ENCODE measurements at regions of chr11 and their contacts with region 1.

Region 1: DNA sequence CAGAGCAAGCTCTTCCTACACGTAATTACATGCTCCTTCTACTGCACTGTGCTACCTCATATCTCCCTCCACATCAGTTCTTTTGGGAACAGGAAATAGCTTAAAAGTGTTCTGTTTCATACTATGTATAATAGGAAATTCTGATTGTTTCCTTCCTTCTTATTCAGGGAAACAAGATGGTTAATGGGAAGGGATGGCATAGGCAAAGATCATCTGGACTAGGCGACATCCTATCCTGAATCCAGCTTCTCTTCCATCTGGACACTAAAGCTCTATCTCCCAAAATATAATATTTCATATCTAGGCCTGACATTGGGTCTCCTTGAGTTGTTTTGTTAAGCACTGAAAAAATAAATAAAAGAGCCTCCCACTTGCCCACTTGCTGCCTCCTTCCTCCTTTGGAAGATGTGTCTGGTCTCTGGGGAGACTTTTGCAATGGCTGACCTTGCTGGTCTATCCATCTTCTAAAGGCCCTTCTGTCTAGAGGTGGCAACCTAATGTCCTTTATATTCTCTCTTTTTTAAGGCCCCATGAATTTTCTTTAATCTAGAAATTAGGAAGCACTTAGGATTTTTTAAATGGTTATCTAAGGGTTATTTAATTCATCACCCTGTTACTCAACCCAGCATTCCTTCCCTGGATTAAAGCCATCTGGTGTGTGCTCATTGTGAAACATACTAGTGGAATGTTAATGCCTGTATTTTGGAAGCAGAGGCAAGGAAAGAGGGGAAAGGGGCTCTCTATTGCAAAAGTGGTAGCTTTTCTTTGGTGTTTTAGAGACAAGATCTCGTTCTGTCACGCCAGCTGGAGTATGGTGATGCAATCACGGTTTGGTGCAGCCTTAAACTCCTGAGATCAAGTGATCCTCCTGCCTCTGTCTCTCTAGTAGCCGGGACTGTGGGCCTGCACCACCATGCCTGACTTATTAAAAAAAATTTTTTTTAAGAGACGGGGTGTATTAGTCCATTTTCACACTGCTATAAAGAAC is 20.6 kb downstream of the CLMP start:
- DNase-seq: peak; percentile 97
- H3K4me3 Mint-ChIP-seq: peak overlapping the region; percentile 11
- H3K27ac Mint-ChIP-seq: peak overlapping the region; percentile 90
- H3K4me1 Mint-ChIP-seq: peaks cover 48% of the 10 kb centered on the region
- H3K27me3 Mint-ChIP-seq: no peaks in the 10 kb centered on the region
- CTCF ChIP-seq: no peak

Region 2: GRCh38 chr11:123062158-123062891 is 112.2 kb before region 1 on chr11:
- CTCF ChIA-PET with region 1: no interaction called
- POLR2A ChIA-PET with region 1: interaction called, 12 read pairs
- intact Hi-C with region 1: loop called (anchors 5 kb)
- DNase-seq: peak; percentile 99
- H3K4me3 Mint-ChIP-seq: peak overlapping the region; percentile 97
- H3K27ac Mint-ChIP-seq: peak overlapping the region; percentile 99
- H3K4me1 Mint-ChIP-seq: peaks cover 46% of the 10 kb centered on the region
- H3K27me3 Mint-ChIP-seq: no peaks in the 10 kb centered on the region
- CTCF ChIP-seq: no peak

Region 3: DNA sequence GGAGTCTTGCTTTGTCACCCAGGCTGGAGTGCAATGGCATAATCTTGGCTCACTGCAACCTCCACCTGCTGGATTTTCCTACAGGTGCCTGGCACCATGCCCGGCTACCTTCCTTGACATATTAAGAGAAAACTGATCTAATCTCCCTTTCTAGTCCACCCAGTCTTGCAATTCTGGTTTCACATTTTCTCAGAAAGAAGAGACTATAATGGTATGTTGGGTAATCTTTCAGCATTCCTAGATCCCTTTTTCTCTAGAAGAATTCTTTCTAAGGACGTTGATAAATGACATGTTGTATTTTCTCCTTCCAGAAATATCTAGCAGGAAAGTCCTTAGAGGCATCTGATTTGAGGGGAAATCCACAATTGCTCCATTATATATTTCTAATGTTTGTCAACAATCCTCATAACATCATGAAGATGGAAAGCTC is 102.1 kb before region 1 on chr11:
- CTCF ChIA-PET with region 1: no interaction called
- POLR2A ChIA-PET with region 1: no interaction called
- intact Hi-C with region 1: no loop called
- DNase-seq: peak; percentile 34
- H3K4me3 Mint-ChIP-seq: no peak overlapping the region
- H3K27ac Mint-ChIP-seq: no peak overlapping the region
- H3K4me1 Mint-ChIP-seq: peaks cover 4% of the 10 kb centered on the region
- H3K27me3 Mint-ChIP-seq: no peaks in the 10 kb centered on the region
- CTCF ChIP-seq: no peak

Region 4: GRCh38 chr11:123145220-123145619 is 29.3 kb before region 1 on chr11:
- CTCF ChIA-PET with region 1: interaction called, 6 read pairs
- POLR2A ChIA-PET with region 1: interaction called, 23 read pairs
- intact Hi-C with region 1: no loop called
- DNase-seq: peak; percentile 99
- H3K4me3 Mint-ChIP-seq: peak overlapping the region; percentile 57
- H3K27ac Mint-ChIP-seq: peak overlapping the region; percentile 72
- H3K4me1 Mint-ChIP-seq: peaks cover 27% of the 10 kb centered on the region
- H3K27me3 Mint-ChIP-seq: no peaks in the 10 kb centered on the region
- CTCF ChIP-seq: no peak

Region 5: GRCh38 chr11:123159183-123159857 is 15.2 kb before region 1 on chr11:
- CTCF ChIA-PET with region 1: interaction called, 26 read pairs
- POLR2A ChIA-PET with region 1: interaction called, 11 read pairs
- intact Hi-C with region 1: loop called (anchors 1 kb)
- DNase-seq: peak; percentile 84
- H3K4me3 Mint-ChIP-seq: peak overlapping the region; percentile 42
- H3K27ac Mint-ChIP-seq: peak overlapping the region; percentile 86
- H3K4me1 Mint-ChIP-seq: peaks cover 42% of the 10 kb centered on the region
- H3K27me3 Mint-ChIP-seq: no peaks in the 10 kb centered on the region
- CTCF ChIP-seq: no peak

Region 6: GRCh38 chr11:123188508-123189165 is 14.1 kb after region 1 on chr11:
- CTCF ChIA-PET with region 1: interaction called, 4 read pairs
- POLR2A ChIA-PET with region 1: interaction called, 52 read pairs
- intact Hi-C with region 1: loop called (anchors 1 kb)
- DNase-seq: peak; percentile 63
- H3K4me3 Mint-ChIP-seq: peak overlapping the region; percentile 52
- H3K27ac Mint-ChIP-seq: peak overlapping the region; percentile 93
- H3K4me1 Mint-ChIP-seq: peaks cover 46% of the 10 kb centered on the region
- H3K27me3 Mint-ChIP-seq: no peaks in the 10 kb centered on the region
- CTCF ChIP-seq: no peak

Region 7: GRCh38 chr11:123195188-123196059 is 20.9 kb after region 1 on chr11 and contains the start of gene CLMP:
- CTCF ChIA-PET with region 1: interaction called, 5 read pairs
- POLR2A ChIA-PET with region 1: interaction called, 32 read pairs
- intact Hi-C with region 1: no loop called
- DNase-seq: peak; percentile 77
- H3K4me3 Mint-ChIP-seq: peak within 1 kb of the TSS; percentile 96
- H3K27ac Mint-ChIP-seq: peak within 1 kb of the TSS; percentile 93
- H3K4me1 Mint-ChIP-seq: peaks cover 53% of the 10 kb centered on the region
- H3K27me3 Mint-ChIP-seq: no peaks in the 10 kb centered on the region
- CTCF ChIP-seq: no peak
- total RNA-seq, gene CLMP: 86.1 and 91.9 TPM in 2 replicates

Region 8: DNA sequence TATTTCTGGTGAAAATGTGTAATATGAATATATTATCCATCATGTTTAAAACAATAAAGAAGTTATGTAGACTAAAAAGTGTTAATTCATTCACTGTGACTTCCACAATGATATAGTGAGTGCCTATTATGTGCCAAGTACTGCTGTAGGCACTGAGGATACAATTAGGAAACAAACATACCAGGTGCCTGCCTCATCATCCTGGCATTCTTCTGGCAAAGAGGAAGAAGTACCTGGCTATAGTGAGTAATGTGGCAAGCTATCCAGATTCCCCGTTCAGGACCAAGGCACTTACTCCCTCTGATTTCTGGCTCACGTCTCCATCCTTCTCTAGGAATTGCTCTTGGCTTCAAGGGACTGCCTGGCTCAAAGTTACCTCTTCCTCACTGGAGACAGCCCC is 98.1 kb after region 1 on chr11:
- CTCF ChIA-PET with region 1: no interaction called
- POLR2A ChIA-PET with region 1: no interaction called
- intact Hi-C with region 1: no loop called
- DNase-seq: peak; percentile 75
- H3K4me3 Mint-ChIP-seq: no peak overlapping the region
- H3K27ac Mint-ChIP-seq: no peak overlapping the region
- H3K4me1 Mint-ChIP-seq: peaks cover 7% of the 10 kb centered on the region
- H3K27me3 Mint-ChIP-seq: peaks cover 4% of the 10 kb centered on the region
- CTCF ChIP-seq: no peak

Region 9: DNA sequence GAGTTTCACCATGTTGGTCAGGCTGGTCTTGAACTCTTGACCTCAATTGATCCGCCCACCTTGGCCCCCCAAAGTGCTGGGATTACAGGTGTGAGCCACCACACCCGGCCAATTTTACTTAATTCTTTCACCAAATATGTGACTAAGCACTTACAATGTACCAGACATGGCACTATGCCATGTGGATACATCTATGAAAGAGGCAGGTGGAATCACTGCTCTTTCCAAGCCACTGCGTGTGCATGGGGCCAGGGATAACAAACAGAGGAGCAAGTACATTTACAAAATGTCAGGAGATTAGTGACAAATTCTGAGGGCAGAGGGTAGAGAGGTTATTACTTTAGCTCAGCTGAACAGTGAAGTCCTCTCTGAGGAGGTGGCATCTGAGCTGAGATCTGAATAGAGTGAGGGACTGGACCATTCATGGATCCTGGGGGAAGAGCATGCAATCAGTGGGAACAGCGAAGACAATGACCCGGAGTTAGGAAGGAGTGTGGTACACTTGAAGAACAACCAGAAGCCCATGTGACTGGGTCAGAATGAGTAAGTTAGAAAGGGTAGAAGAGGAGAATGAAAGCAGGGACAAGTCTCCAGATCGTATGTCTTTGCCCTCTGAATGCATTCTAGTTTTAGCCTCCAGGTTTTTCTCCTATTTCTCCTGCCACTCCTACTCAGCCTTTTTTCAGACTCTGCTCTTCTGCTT is 217.3 kb after region 1 on chr11:
- CTCF ChIA-PET with region 1: no interaction called
- POLR2A ChIA-PET with region 1: no interaction called
- intact Hi-C with region 1: no loop called
- DNase-seq: no peak
- H3K4me3 Mint-ChIP-seq: no peak overlapping the region
- H3K27ac Mint-ChIP-seq: no peak overlapping the region
- H3K4me1 Mint-ChIP-seq: no peaks in the 10 kb centered on the region
- H3K27me3 Mint-ChIP-seq: peaks cover 50% of the 10 kb centered on the region
- CTCF ChIP-seq: no peak